Motor neuron (in vitro differentiated cells): ENCODE measurements at regions of chr7 and their contacts with region 1.

Region 1: DNA sequence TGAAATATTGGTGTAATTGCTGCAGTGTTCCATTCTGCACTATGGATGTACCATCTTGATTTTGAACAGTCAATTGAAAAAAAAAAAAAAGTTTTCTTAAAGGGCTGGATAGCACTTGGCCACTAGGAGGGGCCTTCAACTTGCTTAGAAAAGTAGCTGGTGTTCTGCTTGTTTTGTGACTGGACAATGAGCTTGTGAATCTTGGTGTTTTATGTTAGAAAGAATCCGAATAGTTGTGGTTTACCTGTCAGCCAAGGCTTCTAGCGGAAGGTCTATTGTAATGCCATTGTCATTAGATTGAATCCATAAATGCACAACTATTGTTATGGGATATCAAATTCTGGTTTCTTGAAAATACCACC is 77.1 kb downstream of the BMPER start:
- ATAC-seq: peak in 1 of 8 experiments; percentile 7
- H3K4me3 ChIP-seq: no peak overlapping the region
- H3K27ac ChIP-seq: no peak overlapping the region
- H3K4me1 ChIP-seq: no peaks in the 10 kb centered on the region

Region 2: GRCh38 chr7:33109005-33109757 is 873.2 kb before region 1 on chr7 and contains the start of gene RP9:
- in situ Hi-C with region 1: no loop called
- ATAC-seq: peak; percentile 74 to 95 (median 92)
- H3K4me3 ChIP-seq: peak within 1 kb of the TSS; percentile 68 to 95 (median 91)
- H3K27ac ChIP-seq: peak within 1 kb of the TSS; percentile 65 to 79
- H3K4me1 ChIP-seq: peaks cover 12 to 15% of the 10 kb centered on the region in 2 donors
- total RNA-seq, gene RP9: 10.3 to 30.6 (median 22.9) TPM

Region 3: DNA sequence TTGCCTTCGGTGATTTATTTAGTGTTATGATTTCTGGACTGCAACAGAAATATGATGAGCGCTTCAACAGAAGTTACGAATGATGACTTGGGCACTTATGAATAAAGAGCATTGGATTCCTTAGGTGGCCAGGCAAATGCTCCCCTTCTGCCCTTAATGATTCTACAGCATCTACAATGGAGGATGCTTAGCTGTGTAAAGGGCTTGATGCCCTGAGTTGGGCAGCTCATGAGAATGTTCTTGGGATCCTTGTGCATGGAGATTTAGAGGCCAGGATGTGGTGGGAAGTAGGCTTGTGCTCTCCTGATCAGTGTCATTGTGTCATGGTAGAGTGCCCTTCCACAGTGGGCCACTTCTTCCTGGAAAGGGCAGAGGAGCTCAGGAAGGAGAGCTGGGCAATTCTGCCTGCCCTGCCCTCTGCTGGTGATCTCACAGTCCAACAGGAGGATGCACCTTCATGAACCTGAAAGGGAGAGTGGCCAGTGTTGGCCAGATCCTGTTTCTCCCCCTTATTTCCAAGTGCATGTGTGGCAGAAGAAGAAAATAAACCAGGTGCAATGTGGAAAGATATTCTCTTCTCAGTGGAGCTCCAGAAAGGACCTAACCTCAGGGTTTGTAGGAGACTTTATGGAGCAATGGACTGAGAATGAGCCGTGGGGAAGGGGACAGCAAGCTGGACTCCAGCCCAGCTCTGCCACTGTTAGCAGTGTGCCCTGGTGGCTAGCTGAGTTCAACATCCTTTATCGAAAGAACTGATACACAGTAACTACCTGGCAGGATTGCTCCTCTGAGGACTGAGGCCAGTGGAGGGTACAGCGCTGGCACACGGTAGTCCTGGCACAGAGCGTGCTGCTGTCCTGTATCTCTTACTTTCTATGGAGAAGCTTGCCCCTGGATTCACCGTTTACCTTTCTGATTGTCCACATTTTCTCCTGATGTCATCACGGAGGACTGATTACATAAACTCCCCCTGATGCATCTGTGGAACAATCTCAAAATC is 105.8 kb after region 1 on chr7:
- in situ Hi-C with region 1: loop called in 1 of 9 experiments (anchors 5 kb)
- ATAC-seq: peak in 4 of 8 experiments; percentile 40 to 93 (median 89)
- H3K4me3 ChIP-seq: no peak overlapping the region
- H3K27ac ChIP-seq: no peak overlapping the region
- H3K4me1 ChIP-seq: no peaks in the 10 kb centered on the region

Region 4: DNA sequence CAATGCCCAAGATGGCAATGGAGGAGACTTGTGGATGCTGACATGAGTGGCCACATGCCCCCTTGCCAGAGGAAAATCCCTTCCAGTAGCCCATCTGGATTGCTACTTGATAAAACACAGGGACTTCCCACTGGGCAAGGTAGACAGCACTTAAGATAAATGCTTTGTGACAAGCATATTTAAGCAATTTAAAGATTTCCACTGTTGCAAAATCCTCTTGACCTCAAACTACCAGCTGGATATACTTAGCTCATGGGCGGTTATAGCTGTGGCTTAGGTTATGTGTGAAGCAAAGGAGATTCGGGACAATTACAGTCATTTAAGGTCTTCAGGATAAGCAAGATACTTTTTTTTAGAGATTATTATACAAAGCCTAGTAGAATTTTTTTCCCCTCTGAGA is 161.0 kb after region 1 on chr7:
- in situ Hi-C with region 1: no loop called
- ATAC-seq: peak in 1 of 8 experiments; percentile 72
- H3K4me3 ChIP-seq: no peak overlapping the region
- H3K27ac ChIP-seq: no peak overlapping the region
- H3K4me1 ChIP-seq: peaks cover 0 to 7% of the 10 kb centered on the region in 2 donors

Region 5: DNA sequence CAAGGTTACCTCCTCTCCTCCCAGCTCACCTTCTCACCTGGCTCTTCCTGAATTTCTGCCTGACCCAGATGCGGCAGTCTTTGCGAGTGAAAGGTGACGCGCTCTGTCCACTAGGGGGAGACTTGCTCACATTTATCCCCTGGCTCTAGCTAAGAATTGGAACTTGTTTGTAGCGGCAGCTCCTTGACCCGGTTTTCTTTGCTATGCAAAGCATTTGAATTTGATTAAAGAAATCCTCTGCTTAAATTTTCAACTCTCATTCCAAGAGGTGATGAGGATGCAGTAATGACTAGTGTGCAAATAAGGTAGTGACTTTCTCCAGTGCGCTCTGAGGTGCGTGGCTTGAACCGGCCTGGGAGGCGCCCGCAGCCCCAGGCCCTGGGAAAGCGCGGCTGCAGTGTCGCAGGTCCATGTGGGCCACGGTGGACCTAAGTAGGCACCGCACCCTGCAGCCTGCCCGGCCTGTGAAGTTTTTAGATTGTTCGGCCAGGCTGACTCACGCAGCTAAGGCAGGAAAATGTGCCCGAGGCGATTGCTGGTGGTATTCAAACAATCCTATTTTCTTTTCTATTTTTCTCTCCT is 338.7 kb after region 1 on chr7:
- in situ Hi-C with region 1: no loop called
- ATAC-seq: peak; percentile 75 to 96 (median 85)
- H3K4me3 ChIP-seq: no peak overlapping the region
- H3K27ac ChIP-seq: no peak overlapping the region
- H3K4me1 ChIP-seq: no peaks in the 10 kb centered on the region